Mammary epithelial cell (primary cell): ENCODE measurements at regions of chr3 and their contacts with region 1.

Region 1: DNA sequence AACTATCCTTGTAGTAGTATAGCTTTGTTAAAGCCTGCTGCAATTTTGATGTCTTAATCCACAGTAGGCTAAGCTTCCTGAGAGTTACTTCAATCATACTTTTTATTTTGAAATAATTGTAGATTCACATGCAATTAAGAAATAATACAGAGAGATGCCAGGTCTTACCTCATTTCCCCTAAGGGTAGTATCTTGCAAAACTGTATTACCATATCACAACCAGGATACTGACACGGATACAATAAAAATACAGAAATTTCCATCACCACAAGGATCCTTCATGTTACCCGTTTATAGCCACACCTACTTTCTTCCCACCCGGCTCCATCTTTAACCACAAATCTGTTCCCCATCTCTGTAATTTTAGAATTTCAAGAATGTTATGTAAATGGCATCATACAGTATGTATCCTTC is 21.8 kb downstream of the BDH1 start:
- DNase-seq: peak; percentile 69
- H3K4me3 ChIP-seq: no peak overlapping the region
- H3K27ac ChIP-seq: peak overlapping the region; percentile 46
- H3K4me1 ChIP-seq: peaks cover 20% of the 10 kb centered on the region
- H3K27me3 ChIP-seq: no peaks in the 10 kb centered on the region
- CTCF ChIP-seq: no peak

Region 2: GRCh38 chr3:197260491-197261163 is 273.3 kb before region 1 on chr3:
- CTCF ChIA-PET with region 1: no interaction called
- dilution Hi-C with region 1: no loop called
- in situ Hi-C with region 1: no loop called
- intact Hi-C with region 1: no loop called
- DNase-seq: no peak
- H3K4me3 ChIP-seq: no peak overlapping the region
- H3K27ac ChIP-seq: no peak overlapping the region
- H3K4me1 ChIP-seq: peaks cover 12% of the 10 kb centered on the region
- H3K27me3 ChIP-seq: no peaks in the 10 kb centered on the region
- CTCF ChIP-seq: no peak

Region 3: DNA sequence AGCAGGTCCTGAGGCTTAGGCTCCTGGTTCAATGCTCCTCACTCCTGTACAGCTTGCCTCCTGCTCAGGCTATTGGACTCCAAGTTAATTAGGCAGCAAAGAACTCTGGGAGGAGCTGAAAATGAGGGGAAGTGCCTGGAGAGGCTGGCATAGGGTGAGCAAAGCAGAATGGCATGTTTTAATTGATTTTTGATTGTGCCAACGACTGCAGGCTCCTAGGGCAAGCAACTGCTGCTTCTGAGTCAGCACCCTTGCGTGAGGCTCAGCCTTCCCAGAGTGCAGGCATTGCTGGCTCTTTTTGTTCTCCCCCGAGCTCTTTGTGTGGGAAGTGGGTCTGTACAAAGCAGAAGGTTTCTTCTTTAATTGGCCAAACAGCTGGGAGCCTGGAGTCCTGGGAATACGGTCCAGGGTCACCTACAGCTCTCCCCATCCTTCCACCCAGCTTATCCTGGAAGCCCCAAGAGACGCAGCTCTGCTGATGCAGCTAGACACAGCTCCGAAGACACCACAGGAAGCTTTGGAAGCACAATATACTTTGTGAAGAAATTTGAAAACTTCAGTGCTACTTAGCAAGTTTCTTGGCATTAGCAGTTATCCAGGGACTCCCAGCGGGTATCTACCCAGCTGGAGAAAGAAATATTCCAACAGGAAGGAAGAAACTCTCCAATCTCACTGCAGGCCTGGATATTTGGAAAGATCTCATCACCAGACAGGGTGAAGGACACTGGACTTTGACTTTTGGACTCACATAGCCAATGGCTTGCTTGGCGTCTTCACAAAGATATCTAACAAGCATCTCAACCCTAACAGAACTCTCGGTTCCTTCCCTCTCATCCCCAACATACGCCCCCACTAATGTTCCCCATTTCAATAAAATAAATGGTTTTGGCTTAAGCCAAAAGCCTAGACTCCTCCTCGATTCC is 54.9 kb before region 1 on chr3:
- CTCF ChIA-PET with region 1: no interaction called
- dilution Hi-C with region 1: loop called (anchors 5 kb)
- in situ Hi-C with region 1: no loop called
- intact Hi-C with region 1: no loop called
- DNase-seq: peak; percentile 81
- H3K4me3 ChIP-seq: no peak overlapping the region
- H3K27ac ChIP-seq: peak overlapping the region; percentile 72
- H3K4me1 ChIP-seq: peaks cover 32% of the 10 kb centered on the region
- H3K27me3 ChIP-seq: no peaks in the 10 kb centered on the region
- CTCF ChIP-seq: no peak